K562 (cell line): ENCODE measurements at regions of chr6 and their contacts with region 1.

Region 1: GRCh38 chr6:10694302-10695085 is at the starts of genes C6orf52 and PAK1IP1:
- DNase-seq: peak; percentile 94 to 97 (median 94)
- ATAC-seq: peak; percentile 98
- H3K4me3 ChIP-seq: peak within 1 kb of the TSS; percentile 55
- H3K27ac ChIP-seq: peak within 1 kb of the TSS; percentile 84
- H3K4me1 ChIP-seq: peaks cover 5 to 13% of the 10 kb centered on the region in 2 experiments; a peak in 4 of 5 replicates
- H3K27me3 ChIP-seq: no peaks in the 10 kb centered on the region
- CTCF ChIP-seq: 0 out of 6 replicates have a peak, but pooled peaks of 1 of the 3 experiments have one; percentile 1
- EP300 ChIP-seq: no peak; the same call in none of the 2 replicates
- POLR2A ChIP-seq: peak; percentile 98
- RAD21 ChIP-seq: peak; percentile 34 to 38; a peak in 3 of 4 replicates
- polyA plus RNA-seq, gene C6orf52: 27.6 to 37.0 TPM
- polyA plus RNA-seq, gene PAK1IP1: 189 to 200 TPM

Region 2: GRCh38 chr6:10518557-10519407 is 175.7 kb before region 1 on chr6:
- CTCF ChIA-PET with region 1: no interaction called
- POLR2A ChIA-PET with region 1: no interaction called
- in situ Hi-C with region 1: no loop called
- intact Hi-C with region 1: loop called (anchors 2 kb)
- DNase-seq: peak; percentile 74 to 92 (median 77)
- ATAC-seq: peak; percentile 77
- H3K4me3 ChIP-seq: 0 out of 2 replicates have a peak overlapping the region, but pooled peaks have one; percentile 36
- H3K27ac ChIP-seq: peak overlapping the region; percentile 84
- H3K4me1 ChIP-seq: peaks cover 24 to 26% of the 10 kb centered on the region in 2 experiments
- H3K27me3 ChIP-seq: no peaks in the 10 kb centered on the region
- CTCF ChIP-seq: no peak
- EP300 ChIP-seq: peak; percentile 90
- POLR2A ChIP-seq: no peak
- RAD21 ChIP-seq: 0 out of 4 replicates have a peak, but pooled peaks of 1 of the 2 experiments have one; percentile 31